ENCODE measurements at regions of chr20 and their contacts with region 1.

Region 1: GRCh38 chr20:12012241-12013222 is 94.8 kb downstream of the BTBD3 start:
- DNase-seq: peak; percentile 69
- H3K4me3 Mint-ChIP-seq: no peak overlapping the region
- H3K27ac Mint-ChIP-seq: no peak overlapping the region
- H3K4me1 Mint-ChIP-seq: no peaks in the 10 kb centered on the region
- H3K27me3 Mint-ChIP-seq: no peaks in the 10 kb centered on the region
- CTCF ChIP-seq: peak; percentile 85

Region 2: GRCh38 chr20:11676630-11677284 is 335.8 kb before region 1 on chr20:
- CTCF ChIA-PET with region 1: no interaction called
- intact Hi-C with region 1: loop called (anchors 2 kb)
- DNase-seq: peak; percentile 61
- H3K4me3 Mint-ChIP-seq: no peak overlapping the region
- H3K27ac Mint-ChIP-seq: no peak overlapping the region
- H3K4me1 Mint-ChIP-seq: no peaks in the 10 kb centered on the region
- H3K27me3 Mint-ChIP-seq: peaks cover 13% of the 10 kb centered on the region
- CTCF ChIP-seq: peak; percentile 65

Region 3: GRCh38 chr20:11832851-11833250 is 179.7 kb before region 1 on chr20:
- CTCF ChIA-PET with region 1: no interaction called
- intact Hi-C with region 1: no loop called
- DNase-seq: no peak
- H3K4me3 Mint-ChIP-seq: no peak overlapping the region
- H3K27ac Mint-ChIP-seq: no peak overlapping the region
- H3K4me1 Mint-ChIP-seq: no peaks in the 10 kb centered on the region
- H3K27me3 Mint-ChIP-seq: no peaks in the 10 kb centered on the region
- CTCF ChIP-seq: no peak

Region 4: GRCh38 chr20:11995805-11996567 is 16.5 kb before region 1 on chr20:
- CTCF ChIA-PET with region 1: interaction called, 13 read pairs
- intact Hi-C with region 1: no loop called
- DNase-seq: peak; percentile 60
- H3K4me3 Mint-ChIP-seq: no peak overlapping the region
- H3K27ac Mint-ChIP-seq: peak overlapping the region; percentile 92
- H3K4me1 Mint-ChIP-seq: peaks cover 21% of the 10 kb centered on the region
- H3K27me3 Mint-ChIP-seq: no peaks in the 10 kb centered on the region
- CTCF ChIP-seq: no peak

Region 5: DNA sequence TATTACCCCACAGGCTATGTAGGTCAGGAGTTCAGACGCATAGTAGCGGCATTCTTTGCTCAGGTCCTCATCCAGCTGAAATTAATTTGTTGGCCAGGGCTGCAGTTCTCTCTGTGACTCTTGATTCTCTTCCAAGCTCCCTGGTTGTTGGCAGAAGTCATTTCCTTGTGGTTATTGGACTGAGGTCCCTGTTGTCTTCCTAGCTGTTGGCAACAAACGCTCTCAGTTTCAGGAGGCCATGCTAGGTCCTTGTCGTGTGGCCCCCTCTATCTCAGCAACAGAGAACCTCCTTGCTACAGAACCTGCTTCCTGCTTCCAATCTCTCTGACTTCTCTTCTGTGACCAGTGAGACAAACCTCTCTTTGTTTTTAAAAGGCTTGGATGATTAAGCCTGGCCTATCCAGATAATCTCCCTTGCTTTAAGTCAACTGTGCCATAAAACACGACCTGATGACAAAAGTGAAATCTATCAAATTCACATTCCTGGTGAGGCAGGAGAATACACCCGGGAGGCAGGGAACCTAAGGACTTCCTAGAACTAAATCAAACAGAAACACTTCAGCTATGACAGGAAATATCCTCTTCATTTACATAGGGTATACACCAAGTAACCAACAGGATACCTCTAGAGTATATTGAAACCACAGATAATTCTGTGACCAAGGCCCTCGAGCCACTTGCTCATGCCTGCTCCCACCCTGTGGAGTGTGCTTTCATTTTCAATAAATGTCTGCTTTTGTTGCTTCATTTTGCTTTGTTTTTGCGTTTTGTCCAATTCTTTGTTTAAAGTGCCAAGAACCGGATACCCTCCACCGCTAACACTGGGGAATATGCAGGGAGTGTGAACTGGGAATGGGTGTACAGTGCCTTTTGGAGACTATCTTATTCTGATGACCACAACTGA is 101.2 kb after region 1 on chr20:
- CTCF ChIA-PET with region 1: no interaction called
- intact Hi-C with region 1: loop called (anchors 1 kb)
- DNase-seq: peak; percentile 49
- H3K4me3 Mint-ChIP-seq: peak overlapping the region; percentile 46
- H3K27ac Mint-ChIP-seq: peak overlapping the region; percentile 78
- H3K4me1 Mint-ChIP-seq: peaks cover 35% of the 10 kb centered on the region
- H3K27me3 Mint-ChIP-seq: no peaks in the 10 kb centered on the region
- CTCF ChIP-seq: no peak

Region 6: DNA sequence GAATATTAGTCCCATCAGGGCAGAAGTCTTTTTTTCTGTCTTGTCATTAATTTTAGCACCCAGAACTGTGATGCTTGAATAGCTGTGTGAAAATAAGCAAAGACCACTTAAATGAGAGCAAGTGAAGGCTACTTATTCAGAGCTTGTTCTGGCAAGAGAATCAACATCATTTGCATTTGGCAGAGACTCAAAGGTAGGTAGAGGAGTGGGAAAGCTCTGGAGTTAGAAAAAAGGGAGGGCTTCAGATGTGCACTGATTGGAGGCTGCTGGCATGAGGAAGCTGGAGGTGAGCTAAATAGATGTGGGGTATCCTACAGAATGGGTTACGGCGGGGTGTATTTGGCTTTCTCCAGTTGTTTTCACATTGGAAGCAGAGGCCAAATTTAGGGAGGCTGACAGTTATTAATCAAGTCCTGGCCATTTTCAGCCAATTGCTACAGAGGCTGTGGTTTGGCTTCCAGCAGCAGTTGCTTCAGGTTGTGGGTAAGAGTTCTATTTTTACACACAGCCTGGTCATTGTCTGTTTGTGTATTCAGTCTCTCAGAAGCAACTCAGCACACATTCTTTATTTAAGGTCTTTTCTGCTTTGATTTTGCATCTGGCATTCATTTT is 159.5 kb after region 1 on chr20:
- CTCF ChIA-PET with region 1: interaction called, 8 read pairs
- intact Hi-C with region 1: loop called (anchors 10 kb)
- DNase-seq: no peak
- H3K4me3 Mint-ChIP-seq: no peak overlapping the region
- H3K27ac Mint-ChIP-seq: peak overlapping the region; percentile 19
- H3K4me1 Mint-ChIP-seq: peaks cover 38% of the 10 kb centered on the region
- H3K27me3 Mint-ChIP-seq: no peaks in the 10 kb centered on the region
- CTCF ChIP-seq: no peak

Region 7: GRCh38 chr20:12287575-12287974 is 275.0 kb after region 1 on chr20:
- CTCF ChIA-PET with region 1: no interaction called
- intact Hi-C with region 1: loop called (anchors 5 kb)
- DNase-seq: peak; percentile 43
- H3K4me3 Mint-ChIP-seq: no peak overlapping the region
- H3K27ac Mint-ChIP-seq: peak overlapping the region; percentile 79
- H3K4me1 Mint-ChIP-seq: peaks cover 31% of the 10 kb centered on the region
- H3K27me3 Mint-ChIP-seq: no peaks in the 10 kb centered on the region
- CTCF ChIP-seq: no peak

Region 8: DNA sequence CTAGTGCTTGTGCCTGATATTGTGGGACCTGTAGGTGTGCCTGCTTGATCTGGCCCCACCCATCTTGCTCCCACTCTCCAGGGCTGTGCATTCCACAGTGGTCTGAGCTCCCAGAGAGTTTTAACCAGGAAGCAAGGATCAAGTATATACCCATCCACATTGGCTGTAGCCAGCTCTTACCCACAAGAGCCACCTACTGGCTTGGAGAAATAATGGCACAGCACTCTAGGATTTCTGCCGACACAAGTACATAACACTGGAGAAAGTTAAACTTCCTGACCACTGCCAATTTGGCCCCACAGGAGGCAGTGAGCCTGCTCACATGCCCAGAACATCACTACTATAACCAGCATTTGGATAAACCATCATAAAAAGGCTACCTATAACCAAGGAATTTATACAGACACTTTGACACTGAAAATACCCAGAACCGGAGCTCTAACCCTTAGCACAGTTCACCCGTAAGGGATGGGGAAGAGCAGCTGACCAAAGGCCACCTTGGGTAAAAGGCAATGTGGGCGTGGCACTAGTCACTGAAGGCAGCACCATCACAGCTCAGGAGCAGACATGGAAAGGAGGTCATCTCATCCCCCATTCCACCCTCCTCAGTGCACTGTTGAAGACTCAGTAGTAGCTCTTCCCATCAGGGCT is 345.6 kb after region 1 on chr20:
- CTCF ChIA-PET with region 1: interaction called, 11 read pairs
- intact Hi-C with region 1: no loop called
- DNase-seq: no peak
- H3K4me3 Mint-ChIP-seq: no peak overlapping the region
- H3K27ac Mint-ChIP-seq: no peak overlapping the region
- H3K4me1 Mint-ChIP-seq: no peaks in the 10 kb centered on the region
- H3K27me3 Mint-ChIP-seq: no peaks in the 10 kb centered on the region
- CTCF ChIP-seq: no peak